ENCODE measurements at regions of chr7 and their contacts with region 1.

Region 1: DNA sequence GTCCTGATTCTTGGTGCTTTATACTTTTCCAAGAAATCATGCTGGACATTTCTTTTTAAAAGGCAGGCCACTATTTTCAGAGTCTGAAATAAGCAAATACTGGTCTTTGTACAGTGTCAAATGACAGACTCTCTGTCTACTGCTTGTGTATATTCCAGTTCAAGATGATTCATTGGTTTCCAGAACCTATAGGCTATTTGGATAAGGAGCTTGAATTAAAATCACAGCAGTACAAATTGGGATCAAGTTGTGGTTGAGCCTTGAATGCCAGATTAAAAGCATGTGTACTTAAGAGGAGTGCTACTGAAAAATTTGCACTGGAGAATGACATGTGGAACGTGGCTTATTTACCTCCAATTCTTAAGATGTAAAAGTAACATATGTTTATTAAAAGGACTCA is 10.7 kb downstream of the KMT2E start:
- DNase-seq: no peak
- ATAC-seq: peak; percentile 1; the same call in 1 of the 3 replicates
- H3K4me3 ChIP-seq: 0 out of 2 replicates have a peak overlapping the region, but pooled peaks have one; percentile 28
- H3K27ac ChIP-seq: no peak overlapping the region
- H3K4me1 ChIP-seq: peaks cover 28% of the 10 kb centered on the region
- H3K27me3 ChIP-seq: no peaks in the 10 kb centered on the region
- CTCF ChIP-seq: no peak
- EP300 ChIP-seq: no peak
- POLR2A ChIP-seq: no peak
- RAD21 ChIP-seq: no peak

Region 2: GRCh38 chr7:104174798-104175197 is 849.9 kb before region 1 on chr7:
- CTCF ChIA-PET with region 1: no interaction called
- POLR2A ChIA-PET with region 1: no interaction called
- RAD21 ChIA-PET with region 1: no interaction called
- SMC1A ChIA-PET with region 1: no interaction called
- in situ Hi-C with region 1: no loop called
- intact Hi-C with region 1: no loop called
- DNase-seq: no peak
- ATAC-seq: no peak
- H3K4me3 ChIP-seq: no peak overlapping the region
- H3K27ac ChIP-seq: no peak overlapping the region
- H3K4me1 ChIP-seq: no peaks in the 10 kb centered on the region
- H3K27me3 ChIP-seq: no peaks in the 10 kb centered on the region
- CTCF ChIP-seq: no peak
- EP300 ChIP-seq: no peak
- POLR2A ChIP-seq: no peak
- RAD21 ChIP-seq: no peak

Region 3: GRCh38 chr7:105036217-105037168 is 11.8 kb after region 1 on chr7:
- CTCF ChIA-PET with region 1: interaction called, 3 read pairs
- POLR2A ChIA-PET with region 1: interaction called, 26 read pairs
- RAD21 ChIA-PET with region 1: interaction called, 8 read pairs
- SMC1A ChIA-PET with region 1: interaction called, 10 read pairs
- in situ Hi-C with region 1: no loop called
- intact Hi-C with region 1: no loop called
- DNase-seq: no peak
- ATAC-seq: peak; percentile 48
- H3K4me3 ChIP-seq: no peak overlapping the region
- H3K27ac ChIP-seq: no peak overlapping the region
- H3K4me1 ChIP-seq: 0 out of 2 replicates have a peak, but pooled peaks cover 4% of the 10 kb centered on the region
- H3K27me3 ChIP-seq: no peaks in the 10 kb centered on the region
- CTCF ChIP-seq: no peak
- EP300 ChIP-seq: no peak
- POLR2A ChIP-seq: no peak
- RAD21 ChIP-seq: no peak

Region 4: DNA sequence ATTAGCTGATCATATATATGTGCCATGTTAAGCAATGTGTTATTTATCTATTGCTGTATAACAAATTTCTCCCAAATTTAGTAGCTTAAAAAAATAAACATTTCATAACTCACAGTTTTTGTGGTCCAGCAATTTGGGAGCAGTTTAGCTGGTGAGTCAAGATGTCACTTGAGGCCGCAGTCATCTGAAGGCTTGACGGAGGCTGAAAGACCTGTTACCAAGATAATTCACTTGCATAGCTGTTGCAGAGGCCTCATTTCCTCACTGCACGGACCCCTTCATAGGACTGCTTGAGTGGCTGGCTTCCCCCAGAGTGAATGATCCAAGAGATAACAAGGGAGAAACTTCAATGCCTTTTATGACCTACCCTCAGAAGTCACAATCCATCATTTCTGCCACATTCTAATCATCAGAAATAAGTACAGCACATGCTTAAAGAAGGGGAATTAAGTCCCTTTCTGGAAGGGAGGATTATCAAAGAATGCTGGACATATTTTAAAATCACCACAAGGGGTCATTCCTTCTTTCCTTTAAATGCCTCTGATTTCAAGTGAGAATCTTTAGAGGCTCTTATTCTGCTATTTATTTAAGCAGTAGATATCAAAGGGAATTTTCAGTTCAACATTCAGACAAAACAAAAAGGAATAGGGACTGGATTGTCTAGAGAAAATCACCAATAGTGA is 374.4 kb after region 1 on chr7:
- CTCF ChIA-PET with region 1: no interaction called
- POLR2A ChIA-PET with region 1: no interaction called
- RAD21 ChIA-PET with region 1: no interaction called
- SMC1A ChIA-PET with region 1: no interaction called
- in situ Hi-C with region 1: no loop called
- intact Hi-C with region 1: no loop called
- DNase-seq: no peak
- ATAC-seq: peak; percentile 35; the same call in 1 of the 3 replicates
- H3K4me3 ChIP-seq: no peak overlapping the region
- H3K27ac ChIP-seq: no peak overlapping the region
- H3K4me1 ChIP-seq: no peaks in the 10 kb centered on the region
- H3K27me3 ChIP-seq: no peaks in the 10 kb centered on the region
- CTCF ChIP-seq: peak in 1 of 3 experiments; percentile 27; a peak in 2 of 6 replicates
- EP300 ChIP-seq: no peak
- POLR2A ChIP-seq: no peak
- RAD21 ChIP-seq: peak; percentile 28